ENCODE measurements at regions of chr12 and their contacts with region 1.

Region 1: DNA sequence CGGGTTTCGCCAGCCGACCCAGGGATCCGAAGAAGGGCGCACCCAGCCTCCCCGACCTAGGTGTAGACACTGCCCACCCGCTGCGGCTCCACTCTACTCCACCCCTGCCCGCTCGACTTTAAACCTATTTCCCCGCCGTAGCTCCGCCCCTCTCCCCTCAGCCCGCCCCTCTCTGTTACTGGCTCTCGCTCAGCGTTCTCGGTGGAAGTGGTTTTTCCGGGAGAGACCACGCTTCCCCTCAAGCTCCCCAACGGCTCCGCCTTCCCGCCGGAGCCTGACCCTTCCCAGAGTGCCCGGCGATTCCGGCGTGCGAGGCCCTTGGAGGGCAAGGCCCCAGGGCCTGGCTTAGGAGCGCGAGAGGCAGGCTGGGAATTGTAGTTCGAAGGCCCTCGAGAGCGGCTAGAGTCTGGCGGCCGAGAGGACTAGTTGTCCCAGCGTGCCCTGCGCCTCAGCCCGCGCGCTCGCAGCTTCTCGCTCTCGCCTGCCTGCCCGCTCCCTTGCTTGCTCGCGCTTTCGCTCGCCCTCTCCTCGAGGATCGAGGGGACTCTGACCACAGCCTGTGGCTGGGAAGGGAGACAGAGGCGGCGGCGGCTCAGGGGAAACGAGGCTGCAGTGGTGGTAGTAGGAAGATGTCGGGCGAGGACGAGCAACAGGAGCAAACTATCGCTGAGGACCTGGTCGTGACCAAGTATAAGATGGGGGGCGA is at the start of gene PA2G4:
- DNase-seq: peak; percentile 95 to 97 (median 96)
- H3K4me3 ChIP-seq: peak within 1 kb of the TSS; percentile 62 to 90
- H3K4me3 Mint-ChIP-seq: peak within 1 kb of the TSS; percentile 89 to 99 (median 96)
- H3K27ac ChIP-seq: peak within 1 kb of the TSS; percentile 82
- H3K27ac Mint-ChIP-seq: peak within 1 kb of the TSS; percentile 97 to 100 (median 98)
- H3K4me1 ChIP-seq: peaks cover 49% of the 10 kb centered on the region
- H3K4me1 Mint-ChIP-seq: peaks cover 34 to 62% (median 47%) of the 10 kb centered on the region in 4 donors
- H3K27me3 ChIP-seq: no peaks in the 10 kb centered on the region
- H3K27me3 Mint-ChIP-seq: no peaks in the 10 kb centered on the region
- total RNA-seq, gene PA2G4: 106 to 108 TPM

Region 2: GRCh38 chr12:55715833-55716581 is 388.3 kb before region 1 on chr12 and contains the start of gene BLOC1S1:
- CTCF ChIA-PET with region 1: no interaction called
- POLR2A ChIA-PET with region 1: interaction called, 11 read pairs
- intact Hi-C with region 1: no loop called
- DNase-seq: peak; percentile 88 to 94 (median 90)
- H3K4me3 ChIP-seq: peak within 1 kb of the TSS; percentile 84 to 99
- H3K4me3 Mint-ChIP-seq: peak within 1 kb of the TSS; percentile 90 to 99 (median 94)
- H3K27ac ChIP-seq: peak within 1 kb of the TSS; percentile 91
- H3K27ac Mint-ChIP-seq: peak within 1 kb of the TSS; percentile 94 to 99 (median 98)
- H3K4me1 ChIP-seq: peaks cover 39% of the 10 kb centered on the region
- H3K4me1 Mint-ChIP-seq: peaks cover 18 to 50% (median 36%) of the 10 kb centered on the region in 4 donors
- H3K27me3 ChIP-seq: no peaks in the 10 kb centered on the region
- H3K27me3 Mint-ChIP-seq: peaks cover 0 to 1% of the 10 kb centered on the region in 2 donors
- total RNA-seq, gene BLOC1S1: 80.3 to 87.0 TPM

Region 3: GRCh38 chr12:55780685-55781084 is 323.6 kb before region 1 on chr12:
- CTCF ChIA-PET with region 1: no interaction called
- POLR2A ChIA-PET with region 1: no interaction called
- intact Hi-C with region 1: no loop called
- DNase-seq: no peak
- H3K4me3 ChIP-seq: no peak overlapping the region
- H3K4me3 Mint-ChIP-seq: peak overlapping the region in 2 of 8 donors; percentile 43 to 48
- H3K27ac ChIP-seq: no peak overlapping the region
- H3K27ac Mint-ChIP-seq: peak overlapping the region in 5 of 7 donors; percentile 10 to 85 (median 46)
- H3K4me1 ChIP-seq: peaks cover 11% of the 10 kb centered on the region
- H3K4me1 Mint-ChIP-seq: peaks cover 7 to 24% (median 13%) of the 10 kb centered on the region in 4 donors
- H3K27me3 ChIP-seq: no peaks in the 10 kb centered on the region
- H3K27me3 Mint-ChIP-seq: no peaks in the 10 kb centered on the region

Region 4: DNA sequence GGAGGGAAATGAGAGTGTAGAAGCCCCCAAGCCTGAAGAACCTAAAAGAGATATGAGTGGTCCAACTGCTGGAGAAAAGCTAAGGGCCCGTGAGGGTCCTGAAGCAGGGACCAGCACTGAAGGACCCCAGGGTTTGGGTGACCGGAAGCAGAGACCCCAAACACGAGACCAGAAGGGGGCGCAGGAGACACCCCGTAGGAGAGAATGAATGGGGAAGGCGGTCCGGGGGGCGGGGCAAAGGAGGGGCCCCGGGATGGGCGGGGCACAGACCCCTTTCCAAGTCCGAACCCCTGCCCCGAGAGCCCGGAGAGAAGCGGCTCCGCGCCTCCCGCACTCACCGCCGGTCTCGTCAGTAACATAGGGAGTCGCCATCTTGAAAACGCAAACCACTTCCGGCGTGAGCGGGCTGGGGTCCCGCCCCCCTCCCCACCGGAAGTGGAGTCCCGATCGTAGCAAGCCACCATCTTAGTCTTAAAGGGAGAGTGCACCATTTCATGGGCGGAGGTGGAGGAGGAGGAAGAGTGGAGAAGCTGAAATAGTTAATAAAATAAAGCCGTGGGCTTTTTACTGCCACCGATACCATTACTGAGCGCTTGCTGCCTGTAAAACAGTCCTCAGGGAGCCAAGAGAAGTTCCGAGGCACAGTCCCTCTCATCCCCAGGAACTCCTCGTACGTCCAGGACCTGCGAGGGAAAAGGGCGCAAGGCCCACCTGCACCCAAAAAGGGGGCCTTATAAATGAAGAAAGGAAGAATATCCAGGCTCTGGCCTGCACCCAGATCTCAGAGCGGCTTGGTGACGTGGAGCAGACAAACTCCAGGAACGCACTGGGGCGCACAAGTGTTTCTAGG is 177.3 kb before region 1 on chr12:
- CTCF ChIA-PET with region 1: no interaction called
- POLR2A ChIA-PET with region 1: interaction called, 10 read pairs
- intact Hi-C with region 1: loop called (anchors 5 kb)
- DNase-seq: peak; percentile 83 to 91 (median 85)
- H3K4me3 ChIP-seq: peak overlapping the region; percentile 95 to 100
- H3K4me3 Mint-ChIP-seq: peak overlapping the region; percentile 97 to 100 (median 99)
- H3K27ac ChIP-seq: peak overlapping the region; percentile 88
- H3K27ac Mint-ChIP-seq: peak overlapping the region; percentile 92 to 99 (median 96)
- H3K4me1 ChIP-seq: peaks cover 51% of the 10 kb centered on the region
- H3K4me1 Mint-ChIP-seq: peaks cover 36 to 79% (median 46%) of the 10 kb centered on the region in 4 donors
- H3K27me3 ChIP-seq: no peaks in the 10 kb centered on the region
- H3K27me3 Mint-ChIP-seq: no peaks in the 10 kb centered on the region

Region 5: DNA sequence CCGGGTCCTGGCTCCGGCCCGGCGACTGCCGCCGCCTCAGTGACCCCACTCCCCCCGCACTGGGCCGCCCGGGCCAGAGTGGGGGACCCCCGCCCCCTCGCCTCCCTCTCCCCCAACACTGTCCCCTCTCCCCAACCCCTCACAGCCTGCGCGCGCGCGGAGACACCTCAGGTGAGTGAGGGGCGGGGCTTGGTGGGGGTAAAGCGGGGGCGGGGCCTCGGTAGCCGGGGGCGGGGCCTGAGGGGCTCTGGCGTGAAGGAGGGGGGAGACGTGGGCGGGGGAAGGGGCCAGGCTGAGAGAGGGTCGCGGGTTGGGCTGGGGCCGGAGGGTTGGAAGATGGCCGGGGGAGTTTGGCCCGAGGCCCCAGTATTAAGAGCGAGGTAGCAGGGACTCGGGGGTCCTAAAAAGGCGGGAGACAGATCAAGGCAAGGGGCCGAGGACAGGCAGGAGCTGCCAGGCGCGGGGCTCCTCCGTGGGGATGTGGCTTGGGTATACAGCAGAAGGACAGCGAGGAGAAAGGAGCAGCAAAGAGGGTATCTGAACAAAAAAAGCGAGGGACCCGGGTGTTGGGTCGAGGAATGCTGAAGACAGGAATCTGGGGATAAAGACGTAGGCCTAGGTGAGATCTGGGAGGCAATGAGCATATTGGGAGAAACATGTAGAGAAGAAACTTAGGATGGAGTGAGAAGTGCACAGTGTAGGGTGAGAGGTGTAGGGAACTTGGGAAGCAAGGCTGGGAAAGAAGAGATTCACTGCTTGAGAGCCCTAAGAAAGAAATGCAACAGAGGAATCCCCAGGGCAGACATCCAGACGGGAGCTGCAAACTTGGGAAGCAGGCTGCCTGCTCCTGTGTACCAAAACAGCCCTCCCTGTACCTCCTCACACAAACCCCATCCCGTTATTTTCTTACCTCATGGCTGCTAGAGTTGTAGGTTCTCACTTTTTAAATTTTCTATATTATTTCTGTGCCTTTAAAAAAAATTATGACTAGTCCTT is 96.4 kb before region 1 on chr12:
- CTCF ChIA-PET with region 1: no interaction called
- POLR2A ChIA-PET with region 1: interaction called, 8 read pairs
- intact Hi-C with region 1: loop called (anchors 5 kb)
- DNase-seq: peak; percentile 59 to 67 (median 62)
- H3K4me3 ChIP-seq: peak overlapping the region; percentile 38 to 61
- H3K4me3 Mint-ChIP-seq: peak overlapping the region; percentile 89 to 95 (median 92)
- H3K27ac ChIP-seq: peak overlapping the region; percentile 49
- H3K27ac Mint-ChIP-seq: peak overlapping the region; percentile 83 to 97 (median 92)
- H3K4me1 ChIP-seq: peaks cover 10% of the 10 kb centered on the region
- H3K4me1 Mint-ChIP-seq: peaks cover 10 to 28% (median 22%) of the 10 kb centered on the region in 4 donors
- H3K27me3 ChIP-seq: no peaks in the 10 kb centered on the region
- H3K27me3 Mint-ChIP-seq: no peaks in the 10 kb centered on the region

Region 6: GRCh38 chr12:56078990-56079664 is 25.1 kb before region 1 on chr12:
- CTCF ChIA-PET with region 1: interaction called, 23 read pairs
- POLR2A ChIA-PET with region 1: interaction called, 70 read pairs
- intact Hi-C with region 1: loop called (anchors 1 kb)
- DNase-seq: peak; percentile 27 to 65 (median 40)
- H3K4me3 ChIP-seq: peak overlapping the region; percentile 52 to 86
- H3K4me3 Mint-ChIP-seq: peak overlapping the region; percentile 84 to 91 (median 88)
- H3K27ac ChIP-seq: peak overlapping the region; percentile 2
- H3K27ac Mint-ChIP-seq: peak overlapping the region in 6 of 7 donors; percentile 36 to 91 (median 72)
- H3K4me1 ChIP-seq: peaks cover 20% of the 10 kb centered on the region
- H3K4me1 Mint-ChIP-seq: peaks cover 0 to 25% (median 5%) of the 10 kb centered on the region in 4 donors
- H3K27me3 ChIP-seq: peaks cover 6% of the 10 kb centered on the region
- H3K27me3 Mint-ChIP-seq: peaks cover 0 to 3% of the 10 kb centered on the region in 2 donors

Region 7: GRCh38 chr12:56127888-56128669 is 23.8 kb after region 1 on chr12 and contains the start of gene ESYT1:
- CTCF ChIA-PET with region 1: interaction called, 6 read pairs
- POLR2A ChIA-PET with region 1: interaction called, 51 read pairs
- intact Hi-C with region 1: loop called (anchors 1 kb)
- DNase-seq: peak; percentile 96 to 100 (median 99)
- H3K4me3 ChIP-seq: peak within 1 kb of the TSS; percentile 81 to 96
- H3K4me3 Mint-ChIP-seq: peak within 1 kb of the TSS; percentile 96 to 100 (median 98)
- H3K27ac ChIP-seq: peak within 1 kb of the TSS; percentile 82
- H3K27ac Mint-ChIP-seq: peak within 1 kb of the TSS; percentile 89 to 99 (median 98)
- H3K4me1 ChIP-seq: peaks cover 69% of the 10 kb centered on the region
- H3K4me1 Mint-ChIP-seq: peaks cover 46 to 84% (median 59%) of the 10 kb centered on the region in 4 donors
- H3K27me3 ChIP-seq: no peaks in the 10 kb centered on the region
- H3K27me3 Mint-ChIP-seq: no peaks in the 10 kb centered on the region
- total RNA-seq, gene ESYT1: 249 to 258 TPM

Region 8: GRCh38 chr12:56158029-56158925 is 54.0 kb after region 1 on chr12 and contains the start of gene MYL6:
- CTCF ChIA-PET with region 1: no interaction called
- POLR2A ChIA-PET with region 1: interaction called, 20 read pairs
- intact Hi-C with region 1: no loop called
- DNase-seq: peak; percentile 88 to 98 (median 91)
- H3K4me3 ChIP-seq: peak within 1 kb of the TSS; percentile 86 to 89
- H3K4me3 Mint-ChIP-seq: peak within 1 kb of the TSS; percentile 93 to 100 (median 97)
- H3K27ac ChIP-seq: peak within 1 kb of the TSS; percentile 97
- H3K27ac Mint-ChIP-seq: peak within 1 kb of the TSS; percentile 96 to 100 (median 99)
- H3K4me1 ChIP-seq: peaks cover 40% of the 10 kb centered on the region
- H3K4me1 Mint-ChIP-seq: peaks cover 28 to 64% (median 37%) of the 10 kb centered on the region in 4 donors
- H3K27me3 ChIP-seq: no peaks in the 10 kb centered on the region
- H3K27me3 Mint-ChIP-seq: no peaks in the 10 kb centered on the region
- total RNA-seq, gene MYL6: 567 to 589 TPM

Region 9: GRCh38 chr12:56387152-56387736 is 283.0 kb after region 1 on chr12:
- CTCF ChIA-PET with region 1: no interaction called
- POLR2A ChIA-PET with region 1: no interaction called
- intact Hi-C with region 1: no loop called
- DNase-seq: no peak
- H3K4me3 ChIP-seq: no peak overlapping the region
- H3K4me3 Mint-ChIP-seq: no peak overlapping the region
- H3K27ac ChIP-seq: no peak overlapping the region
- H3K27ac Mint-ChIP-seq: no peak overlapping the region
- H3K4me1 ChIP-seq: no peaks in the 10 kb centered on the region
- H3K4me1 Mint-ChIP-seq: no peaks in the 10 kb centered on the region
- H3K27me3 ChIP-seq: no peaks in the 10 kb centered on the region
- H3K27me3 Mint-ChIP-seq: no peaks in the 10 kb centered on the region